Activated T-helper 1 cell treated with anti-CD3 and anti-CD28 coated beads, Interleukin-12 subunit alpha, Interleukin-12 subunit beta, Interleukin-2, Interleukin-4 antibody, amounts not matched to agents 30 ng/mL and 10 ng/mL and 1 ng/mL, durations not matched to agents 14 hours and 24 hours and 36 hours (primary cell): ENCODE measurements at regions of chr15 and their contacts with region 1.

Region 1: GRCh38 chr15:98914626-98915025 is 93.0 kb downstream of the PGPEP1L start:
- DNase-seq: no peak
- H3K4me3 Mint-ChIP-seq: peak overlapping the region; percentile 25
- H3K27ac Mint-ChIP-seq: peak overlapping the region; percentile 16
- H3K4me1 Mint-ChIP-seq: peaks cover 47% of the 10 kb centered on the region
- H3K27me3 Mint-ChIP-seq: no peaks in the 10 kb centered on the region

Region 2: DNA sequence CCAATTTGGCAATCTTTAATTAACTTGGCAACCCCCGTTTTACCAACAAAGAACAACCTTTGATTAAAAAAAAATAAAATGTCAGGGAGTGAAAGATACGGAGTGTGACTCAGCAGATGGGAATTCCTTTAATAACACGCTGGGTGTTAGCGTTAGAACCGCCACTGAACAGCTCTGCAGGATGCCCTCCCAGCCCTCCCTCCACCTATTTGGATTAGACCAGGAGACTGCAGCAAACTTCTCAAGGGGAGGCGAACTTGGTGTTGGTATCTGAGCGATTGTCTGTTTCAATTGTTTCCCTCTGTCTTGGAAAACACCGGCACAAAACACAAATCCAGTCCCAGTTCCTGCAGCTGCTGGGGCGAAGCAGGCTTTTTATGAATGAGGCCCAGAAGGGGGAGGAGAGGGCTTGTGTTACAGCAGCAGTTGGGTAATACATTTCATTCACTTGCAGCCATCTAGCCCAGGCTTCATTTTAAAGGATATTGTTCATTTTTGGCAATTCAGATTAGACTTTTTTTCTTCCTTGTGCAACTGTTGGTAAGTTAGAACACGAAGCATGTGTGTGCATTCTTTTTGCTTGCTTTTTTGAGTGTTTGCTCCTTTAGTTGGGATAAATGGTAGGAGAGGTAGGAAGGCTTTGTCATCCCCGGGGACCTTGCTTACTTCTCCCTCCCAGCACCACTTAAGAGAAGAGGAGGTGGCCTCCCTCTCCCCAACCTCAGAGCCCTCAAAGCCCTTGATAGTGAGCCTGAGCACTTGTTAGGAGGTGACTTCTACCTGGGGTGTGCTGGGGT is 114.0 kb before region 1 on chr15:
- intact Hi-C with region 1: no loop called
- DNase-seq: no peak
- H3K4me3 Mint-ChIP-seq: no peak overlapping the region
- H3K27ac Mint-ChIP-seq: no peak overlapping the region
- H3K4me1 Mint-ChIP-seq: peaks cover 8% of the 10 kb centered on the region
- H3K27me3 Mint-ChIP-seq: peaks cover 2% of the 10 kb centered on the region

Region 3: DNA sequence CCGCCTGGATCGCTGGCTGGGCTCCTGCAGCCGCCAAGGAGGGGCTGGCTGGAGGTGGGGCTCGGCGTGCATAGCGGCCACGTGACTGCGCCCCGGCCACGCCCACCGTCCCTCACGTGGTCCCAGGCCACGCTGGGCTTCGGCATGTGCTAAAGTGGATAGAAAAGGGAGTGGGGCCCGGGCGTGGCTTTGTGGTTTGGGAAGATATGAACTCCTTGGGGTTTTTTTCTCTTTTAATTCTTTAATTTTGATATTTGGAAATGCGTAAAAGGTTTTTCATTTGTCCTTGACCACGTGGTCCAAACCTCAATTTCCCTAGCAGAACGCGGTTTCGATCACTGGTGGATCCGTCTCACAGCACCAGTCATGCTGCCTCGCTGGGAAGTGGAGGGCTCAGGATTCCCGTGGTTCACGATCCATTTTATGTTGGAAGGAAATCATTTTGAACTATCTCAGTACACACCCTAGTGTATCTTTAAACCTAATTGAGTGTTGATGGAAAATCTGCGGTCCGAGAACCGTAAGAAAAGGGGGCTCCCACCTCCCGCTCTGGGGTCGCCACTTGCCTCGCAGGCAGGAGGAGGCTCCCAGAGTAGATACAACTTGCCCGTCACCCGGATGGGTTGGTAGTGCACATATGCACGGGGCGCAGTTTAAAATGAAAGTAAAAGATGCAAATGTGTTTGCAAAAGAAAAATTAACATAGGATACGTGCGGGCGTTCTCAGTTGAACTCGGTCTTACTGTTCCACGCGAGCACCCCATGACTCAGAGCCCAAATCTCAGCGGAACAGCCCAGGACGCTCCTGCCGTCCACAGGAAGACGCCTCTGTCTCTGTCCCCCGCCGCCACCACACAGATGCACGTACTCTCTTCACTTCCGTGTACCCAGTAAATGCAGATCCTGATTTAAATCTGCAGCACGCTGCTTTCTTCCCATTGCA is 49.0 kb before region 1 on chr15:
- intact Hi-C with region 1: loop called (anchors 5 kb)
- DNase-seq: peak; percentile 63
- H3K4me3 Mint-ChIP-seq: peak overlapping the region; percentile 82
- H3K27ac Mint-ChIP-seq: peak overlapping the region; percentile 89
- H3K4me1 Mint-ChIP-seq: peaks cover 30% of the 10 kb centered on the region
- H3K27me3 Mint-ChIP-seq: peaks cover 2% of the 10 kb centered on the region

Region 4: GRCh38 chr15:98937413-98938104 is 22.9 kb after region 1 on chr15:
- intact Hi-C with region 1: loop called (anchors 1 kb)
- DNase-seq: no peak
- H3K4me3 Mint-ChIP-seq: no peak overlapping the region
- H3K27ac Mint-ChIP-seq: peak overlapping the region; percentile 40
- H3K4me1 Mint-ChIP-seq: peaks cover 22% of the 10 kb centered on the region
- H3K27me3 Mint-ChIP-seq: no peaks in the 10 kb centered on the region

Region 5: GRCh38 chr15:98952381-98952803 is 37.8 kb after region 1 on chr15:
- intact Hi-C with region 1: loop called (anchors 2 kb)
- DNase-seq: no peak
- H3K4me3 Mint-ChIP-seq: peak overlapping the region; percentile 15
- H3K27ac Mint-ChIP-seq: peak overlapping the region; percentile 36
- H3K4me1 Mint-ChIP-seq: peaks cover 20% of the 10 kb centered on the region
- H3K27me3 Mint-ChIP-seq: no peaks in the 10 kb centered on the region

Region 6: GRCh38 chr15:99014803-99015676 is 100.4 kb after region 1 on chr15:
- intact Hi-C with region 1: loop called (anchors 2 kb)
- DNase-seq: peak; percentile 60
- H3K4me3 Mint-ChIP-seq: peak overlapping the region; percentile 74
- H3K27ac Mint-ChIP-seq: peak overlapping the region; percentile 78
- H3K4me1 Mint-ChIP-seq: no peaks in the 10 kb centered on the region
- H3K27me3 Mint-ChIP-seq: peaks cover 38% of the 10 kb centered on the region

Region 7: DNA sequence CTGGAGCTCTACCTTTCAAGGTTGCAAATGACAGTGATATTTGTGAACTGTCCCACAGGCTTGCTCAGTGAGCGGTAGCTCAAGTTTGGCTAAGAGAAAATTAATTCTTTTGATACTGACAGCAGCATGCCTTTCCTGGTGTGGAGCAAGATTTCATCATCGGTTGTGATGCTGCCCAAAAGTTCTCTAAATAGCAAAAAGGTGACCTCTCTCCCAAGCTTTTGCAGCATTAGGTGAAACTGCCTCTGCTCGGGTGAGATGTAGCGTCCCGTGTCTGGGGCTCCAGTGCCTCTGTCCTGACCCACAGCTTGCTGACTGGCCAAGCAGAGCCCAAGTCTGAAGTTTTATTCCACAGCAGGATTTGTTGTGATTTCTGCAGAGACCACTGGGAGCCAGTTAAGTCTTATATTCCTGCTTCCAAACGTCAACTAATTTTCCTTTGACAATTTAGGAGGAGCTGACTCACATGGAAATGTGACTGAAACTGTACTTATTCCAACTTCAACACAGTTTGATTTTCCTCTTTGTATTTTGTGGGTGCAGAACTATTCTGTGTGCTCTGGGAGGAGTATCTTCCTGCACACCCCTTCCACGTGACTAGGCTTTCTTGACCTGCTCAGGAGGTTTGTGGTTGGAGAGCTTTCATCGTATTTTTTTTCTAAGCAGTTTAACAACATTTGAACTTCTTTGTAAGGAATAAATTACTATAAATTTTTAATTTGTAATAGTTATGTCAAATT is 196.1 kb after region 1 on chr15:
- intact Hi-C with region 1: no loop called
- DNase-seq: no peak
- H3K4me3 Mint-ChIP-seq: no peak overlapping the region
- H3K27ac Mint-ChIP-seq: no peak overlapping the region
- H3K4me1 Mint-ChIP-seq: peaks cover 12% of the 10 kb centered on the region
- H3K27me3 Mint-ChIP-seq: peaks cover 15% of the 10 kb centered on the region